Panc1 (cell line): ENCODE measurements at regions of chr6 and their contacts with region 1.

Region 1: DNA sequence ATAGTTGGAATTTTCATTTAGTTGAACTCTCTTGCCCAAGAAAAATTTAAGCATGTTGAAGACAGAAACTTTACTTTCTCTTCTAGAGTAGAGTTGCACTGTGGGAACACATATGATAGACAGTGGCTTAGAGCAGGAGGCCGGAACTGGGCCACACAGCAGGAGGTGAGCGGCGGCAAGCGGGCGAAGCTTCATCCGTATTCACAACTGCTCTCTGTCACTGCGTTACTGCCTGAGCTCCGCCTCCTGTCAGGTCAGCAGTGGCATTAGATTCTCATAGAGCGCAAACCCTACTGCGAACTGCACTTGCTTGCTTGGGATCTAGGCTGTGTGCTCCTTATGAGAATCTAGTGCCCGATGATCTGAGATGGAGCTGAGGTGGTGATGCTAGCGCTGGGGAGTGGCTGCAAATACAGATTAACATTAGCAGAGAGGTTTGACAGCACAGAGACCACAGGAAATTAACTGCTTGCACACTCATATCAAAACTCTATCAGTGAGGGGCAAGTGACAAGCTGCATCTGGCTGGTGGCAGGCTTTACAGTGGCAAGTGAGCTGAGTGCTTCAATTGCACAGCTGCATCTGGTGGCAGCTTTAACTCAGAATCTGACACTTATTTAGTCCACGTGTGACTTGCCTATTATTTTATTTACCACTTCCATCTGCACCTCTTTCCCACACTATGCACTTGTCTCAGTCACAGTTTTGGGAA is 174.9 kb upstream of the C6orf118 start:
- DNase-seq: no peak
- ATAC-seq: no peak
- H3K4me3 ChIP-seq: no peak overlapping the region
- H3K27ac ChIP-seq: no peak overlapping the region
- H3K4me1 ChIP-seq: no peaks in the 10 kb centered on the region
- H3K27me3 ChIP-seq: no peaks in the 10 kb centered on the region
- CTCF ChIP-seq: no peak

Region 2: DNA sequence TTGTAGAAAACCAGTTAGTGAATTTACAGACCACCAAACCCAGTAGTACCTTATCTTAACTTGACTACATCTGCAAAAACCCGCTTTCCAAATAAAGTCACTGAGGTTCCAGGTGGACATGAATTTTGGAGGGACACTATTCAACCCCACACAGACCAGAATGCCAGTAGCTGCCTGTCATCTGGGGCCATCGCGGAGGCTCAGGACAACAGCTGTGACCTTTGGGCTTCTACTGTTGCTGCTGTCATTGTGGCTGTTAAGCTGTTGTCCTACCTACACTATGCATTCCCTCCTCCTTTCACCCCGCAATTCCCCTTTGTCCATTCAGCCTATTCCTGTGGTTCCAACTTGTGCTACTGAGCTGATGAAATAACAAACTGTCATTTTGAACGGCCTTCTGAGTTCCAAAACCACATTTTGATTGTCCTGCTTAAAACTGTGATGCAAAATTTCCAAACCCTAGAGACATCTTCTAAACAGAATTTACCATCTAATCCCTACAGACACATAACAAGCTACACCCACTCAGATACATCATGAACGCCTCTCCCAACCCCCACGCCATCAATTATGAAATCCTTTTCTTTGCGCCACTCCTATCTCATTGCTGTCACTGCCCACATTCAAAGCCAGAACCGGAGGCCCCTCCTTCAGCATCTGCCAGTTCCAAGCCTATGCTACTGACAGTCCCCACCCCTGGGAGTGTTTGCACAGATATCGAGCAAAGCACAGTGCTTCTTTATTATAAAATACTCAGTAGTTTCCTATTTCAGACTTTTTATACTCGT is 299.9 kb before region 1 on chr6:
- CTCF ChIA-PET with region 1: interaction called, 10 read pairs
- POLR2A ChIA-PET with region 1: no interaction called
- in situ Hi-C with region 1: no loop called
- intact Hi-C with region 1: no loop called
- DNase-seq: no peak
- ATAC-seq: no peak
- H3K4me3 ChIP-seq: no peak overlapping the region
- H3K27ac ChIP-seq: no peak overlapping the region
- H3K4me1 ChIP-seq: no peaks in the 10 kb centered on the region
- H3K27me3 ChIP-seq: no peaks in the 10 kb centered on the region
- CTCF ChIP-seq: no peak

Region 3: DNA sequence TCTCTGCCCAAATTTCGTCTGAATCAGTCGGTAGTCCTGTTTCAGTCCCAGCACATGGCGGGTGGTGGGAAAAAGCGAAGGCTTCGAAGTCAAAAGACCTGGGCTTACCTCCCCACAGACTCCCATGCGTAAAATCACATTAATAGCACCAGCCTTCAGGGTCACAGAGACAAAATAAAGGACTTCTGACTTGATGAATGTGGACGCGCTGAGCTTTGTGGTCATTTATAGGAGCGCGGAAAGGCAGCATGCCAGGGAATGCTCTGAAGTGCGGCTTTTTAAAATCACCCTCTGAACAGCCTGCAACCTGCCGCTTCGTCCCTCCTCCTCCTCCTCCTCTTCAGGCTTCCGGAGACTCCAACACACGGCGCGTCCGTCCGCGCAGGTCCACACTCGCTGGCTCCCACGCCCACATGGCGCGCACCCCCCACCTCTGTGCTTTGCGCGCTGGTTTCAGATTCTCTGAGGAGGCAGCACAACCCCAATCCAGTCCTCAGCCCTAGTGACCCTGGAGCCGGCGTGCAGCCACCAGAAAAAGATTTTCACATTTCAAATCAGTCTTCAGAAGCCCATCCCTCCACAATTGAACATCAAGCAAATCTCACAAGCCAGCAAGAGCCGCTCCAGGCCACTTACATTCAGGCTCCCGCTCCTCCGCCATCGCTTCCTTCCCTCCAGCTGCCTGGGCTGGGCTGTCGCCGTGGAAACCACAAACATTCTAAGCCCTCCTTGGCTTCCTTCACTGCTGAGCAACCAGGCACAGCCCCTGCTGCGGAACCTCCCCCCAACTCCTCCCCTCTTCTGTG is 175.2 kb before region 1 on chr6 and contains the start of gene C6orf118:
- CTCF ChIA-PET with region 1: no interaction called
- POLR2A ChIA-PET with region 1: no interaction called
- in situ Hi-C with region 1: no loop called
- intact Hi-C with region 1: no loop called
- DNase-seq: no peak
- ATAC-seq: peak; percentile 91
- H3K4me3 ChIP-seq: peak within 1 kb of the TSS; percentile 35 to 45
- H3K27ac ChIP-seq: no peak within 1 kb of the TSS
- H3K4me1 ChIP-seq: no peaks in the 10 kb centered on the region
- H3K27me3 ChIP-seq: no peaks in the 10 kb centered on the region
- CTCF ChIP-seq: no peak
- total RNA-seq, gene C6orf118: not detected